Activated CD4-positive, alpha-beta memory T cell treated with anti-CD3 and anti-CD28 coated beads for 36 hours (primary cell): ENCODE measurements at regions of chr11 and their contacts with region 1.

Region 1: DNA sequence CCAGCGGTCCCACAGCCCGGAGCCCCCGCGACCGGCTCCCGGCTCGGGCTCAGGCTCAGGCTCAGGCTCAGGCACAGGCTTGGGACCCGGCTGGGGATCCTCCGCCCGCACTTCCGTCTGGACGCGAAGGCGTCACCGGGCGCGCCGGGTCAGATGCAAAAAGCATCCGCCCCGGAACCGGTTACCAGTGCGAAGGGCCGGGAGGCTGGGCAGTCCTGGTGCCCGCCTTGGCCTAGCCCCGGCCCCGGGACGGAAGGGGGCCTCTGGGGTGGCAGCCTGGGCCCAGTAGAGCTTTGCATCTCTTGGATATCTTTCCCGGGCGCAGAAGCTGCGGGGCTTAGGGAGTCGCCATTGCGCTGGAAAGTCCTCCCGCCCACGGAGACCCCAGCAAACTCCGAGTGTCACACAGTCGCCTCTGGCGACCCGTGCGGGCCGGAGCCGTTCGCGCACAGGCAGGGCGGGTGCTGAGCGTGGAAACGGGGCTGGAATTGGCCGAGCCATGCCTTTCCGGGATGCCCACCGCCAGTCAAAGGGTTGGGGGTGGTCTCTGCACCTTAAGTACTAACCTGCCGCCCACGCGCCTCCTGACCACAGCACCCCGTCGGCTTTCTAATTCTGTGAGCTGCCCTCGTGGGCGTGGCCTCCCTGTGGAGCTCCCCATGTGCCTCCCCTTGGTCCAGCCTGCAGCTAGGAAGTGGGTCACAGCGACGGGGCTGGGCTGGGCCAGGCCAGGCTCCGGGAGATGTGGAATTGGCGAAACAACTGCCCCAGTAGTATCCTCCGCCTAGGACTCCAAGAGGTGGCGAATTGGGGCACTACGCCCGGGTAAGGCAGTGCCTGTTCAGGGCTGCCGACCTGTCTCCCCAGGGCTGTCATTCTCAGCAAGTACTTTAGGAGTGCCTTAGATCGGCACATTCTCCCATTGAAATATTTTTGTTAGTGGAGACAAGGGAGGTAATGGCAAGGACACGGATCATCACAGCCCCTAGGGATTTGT is at the start of gene TMEM9B:
- DNase-seq: peak; percentile 90
- H3K4me3 Mint-ChIP-seq: peak within 1 kb of the TSS; percentile 94
- H3K27ac Mint-ChIP-seq: peak within 1 kb of the TSS; percentile 90
- H3K4me1 Mint-ChIP-seq: peaks cover 32% of the 10 kb centered on the region
- H3K27me3 Mint-ChIP-seq: no peaks in the 10 kb centered on the region
- total RNA-seq, gene TMEM9B: 17.5 to 19.1 TPM

Region 2: GRCh38 chr11:8688414-8689362 is 275.9 kb before region 1 on chr11:
- CTCF ChIA-PET with region 1: interaction called, 12 read pairs
- POLR2A ChIA-PET with region 1: interaction called, 21 read pairs
- intact Hi-C with region 1: loop called (anchors 1 kb)
- DNase-seq: peak; percentile 94
- H3K4me3 Mint-ChIP-seq: peak overlapping the region; percentile 97
- H3K27ac Mint-ChIP-seq: peak overlapping the region; percentile 88
- H3K4me1 Mint-ChIP-seq: peaks cover 57% of the 10 kb centered on the region
- H3K27me3 Mint-ChIP-seq: no peaks in the 10 kb centered on the region

Region 3: DNA sequence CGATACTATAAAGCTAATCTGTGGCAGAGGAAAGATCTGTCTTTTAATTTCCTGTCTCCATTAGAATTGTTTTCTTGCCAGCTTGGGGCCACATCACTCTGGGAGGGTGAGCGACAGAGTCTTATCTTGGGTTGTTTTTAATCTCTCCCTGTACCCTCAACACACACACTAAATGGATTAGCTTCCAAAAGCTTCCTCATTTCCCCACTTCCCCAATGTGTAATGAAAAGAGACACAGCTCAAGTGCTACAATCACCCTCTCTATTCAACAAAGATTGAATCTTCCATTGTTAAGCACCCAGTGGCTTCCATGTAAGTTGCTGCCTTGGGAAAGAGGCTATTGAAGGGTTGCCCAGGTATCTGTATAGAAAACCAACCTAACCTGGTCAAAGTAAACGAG is 15.7 kb before region 1 on chr11:
- CTCF ChIA-PET with region 1: interaction called, 16 read pairs
- POLR2A ChIA-PET with region 1: no interaction called
- intact Hi-C with region 1: no loop called
- DNase-seq: no peak
- H3K4me3 Mint-ChIP-seq: no peak overlapping the region
- H3K27ac Mint-ChIP-seq: no peak overlapping the region
- H3K4me1 Mint-ChIP-seq: no peaks in the 10 kb centered on the region
- H3K27me3 Mint-ChIP-seq: no peaks in the 10 kb centered on the region

Region 4: GRCh38 chr11:9060700-9061111 is 96.1 kb after region 1 on chr11:
- CTCF ChIA-PET with region 1: interaction called, 3 read pairs
- POLR2A ChIA-PET with region 1: no interaction called
- intact Hi-C with region 1: loop called (anchors 2 kb)
- DNase-seq: peak; percentile 88
- H3K4me3 Mint-ChIP-seq: no peak overlapping the region
- H3K27ac Mint-ChIP-seq: no peak overlapping the region
- H3K4me1 Mint-ChIP-seq: peaks cover 12% of the 10 kb centered on the region
- H3K27me3 Mint-ChIP-seq: peaks cover 35% of the 10 kb centered on the region